HEK293 (cell line): ENCODE measurements at regions of chr12 and their contacts with region 1.

Region 1: GRCh38 chr12:56117778-56118687 is at the start of gene ZC3H10:
- H3K4me3 ChIP-seq: peak within 1 kb of the TSS; percentile 78
- H3K27ac ChIP-seq: peak within 1 kb of the TSS; percentile 99
- H3K4me1 ChIP-seq: peaks cover 5% of the 10 kb centered on the region
- CTCF ChIP-seq: peak; percentile 99

Region 2: DNA sequence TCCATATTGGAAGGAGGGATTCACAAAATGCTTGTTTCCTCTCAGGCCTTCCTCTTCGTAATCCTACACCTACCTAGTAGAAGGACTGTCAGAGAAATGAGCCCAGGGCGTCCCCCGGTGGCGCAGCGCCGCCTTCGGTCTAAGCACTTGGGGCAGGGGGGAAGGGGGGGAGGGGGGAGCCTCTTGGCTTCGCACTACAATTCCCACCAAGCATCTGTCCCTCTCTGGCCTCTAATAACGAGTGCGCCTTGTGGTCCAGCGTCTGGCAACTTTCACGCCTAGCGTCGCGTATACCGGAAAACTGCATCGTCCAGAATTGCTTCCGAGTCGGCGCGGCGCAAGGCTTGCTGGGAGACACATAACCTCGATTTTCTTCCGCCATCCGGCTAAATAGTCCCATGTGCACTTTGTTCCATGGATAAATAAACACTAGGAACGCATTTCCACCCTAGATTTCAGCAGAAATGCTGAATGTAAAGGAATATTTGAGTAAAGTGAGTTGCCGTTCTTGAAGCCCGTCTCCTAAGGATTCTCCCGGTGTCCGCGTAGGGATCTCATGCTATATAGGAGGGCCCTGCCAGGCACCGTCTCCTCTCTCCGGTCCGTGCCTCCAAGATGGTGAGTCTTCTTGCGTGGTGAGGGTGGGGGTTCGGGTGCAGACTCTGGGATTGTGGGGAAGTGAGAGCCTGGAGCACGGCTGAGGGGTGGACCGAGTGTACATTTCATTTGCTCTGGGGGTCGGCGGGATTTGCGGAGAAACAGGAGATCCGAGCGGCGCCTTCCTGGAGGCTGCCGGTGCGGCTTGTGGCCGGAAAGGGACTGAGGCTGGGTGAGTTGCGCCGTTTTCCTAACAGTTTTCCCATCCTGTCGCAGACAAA is 76.2 kb before region 1 on chr12 and contains the start of gene RPS26:
- CTCF ChIA-PET with region 1: interaction called, 10 read pairs
- POLR2A ChIA-PET with region 1: interaction called, 34 read pairs
- H3K4me3 ChIP-seq: peak within 1 kb of the TSS; percentile 75
- H3K27ac ChIP-seq: peak within 1 kb of the TSS; percentile 93
- H3K4me1 ChIP-seq: peaks cover 19% of the 10 kb centered on the region
- CTCF ChIP-seq: peak; percentile 57

Region 3: GRCh38 chr12:56078990-56079664 is 38.9 kb before region 1 on chr12:
- CTCF ChIA-PET with region 1: interaction called, 5 read pairs
- POLR2A ChIA-PET with region 1: interaction called, 23 read pairs
- H3K4me3 ChIP-seq: peak overlapping the region; percentile 40
- H3K27ac ChIP-seq: peak overlapping the region; percentile 64; the same call in 1 of the 2 replicates
- H3K4me1 ChIP-seq: no peaks in the 10 kb centered on the region; the same call in 1 of the 2 replicates
- CTCF ChIP-seq: peak; percentile 92

Region 4: DNA sequence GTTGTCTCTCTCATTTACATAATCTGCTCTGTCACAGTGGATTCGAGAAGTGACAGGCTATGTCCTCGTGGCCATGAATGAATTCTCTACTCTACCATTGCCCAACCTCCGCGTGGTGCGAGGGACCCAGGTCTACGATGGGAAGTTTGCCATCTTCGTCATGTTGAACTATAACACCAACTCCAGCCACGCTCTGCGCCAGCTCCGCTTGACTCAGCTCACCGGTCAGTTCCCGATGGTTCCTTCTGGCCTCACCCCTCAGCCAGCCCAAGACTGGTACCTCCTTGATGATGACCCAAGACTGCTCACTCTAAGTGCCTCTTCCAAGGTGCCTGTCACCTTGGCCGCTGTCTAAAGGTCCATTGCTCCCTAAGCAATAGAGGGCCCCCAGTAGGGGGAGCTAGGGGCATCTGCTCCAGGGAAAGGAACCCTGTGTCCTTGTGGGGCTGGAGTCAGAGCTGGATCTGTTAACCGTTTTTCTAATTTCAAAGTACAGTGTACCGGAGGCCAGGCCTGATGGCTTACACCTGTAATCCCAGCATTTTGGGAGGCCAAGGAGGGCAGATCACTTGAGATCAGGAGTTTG is 33.0 kb before region 1 on chr12:
- CTCF ChIA-PET with region 1: interaction called, 5 read pairs
- POLR2A ChIA-PET with region 1: interaction called, 10 read pairs
- H3K4me3 ChIP-seq: no peak overlapping the region
- H3K27ac ChIP-seq: no peak overlapping the region
- H3K4me1 ChIP-seq: no peaks in the 10 kb centered on the region; the same call in 1 of the 2 replicates
- CTCF ChIP-seq: 0 out of 2 replicates have a peak, but pooled peaks have one; percentile 10

Region 5: GRCh38 chr12:56104109-56104814 is 13.8 kb before region 1 on chr12 and contains the start of gene PA2G4:
- CTCF ChIA-PET with region 1: interaction called, 27 read pairs
- POLR2A ChIA-PET with region 1: interaction called, 165 read pairs
- H3K4me3 ChIP-seq: peak within 1 kb of the TSS; percentile 82
- H3K27ac ChIP-seq: peak within 1 kb of the TSS; percentile 90
- H3K4me1 ChIP-seq: 0 out of 2 replicates have a peak, but pooled peaks cover 2% of the 10 kb centered on the region
- CTCF ChIP-seq: no peak; the same call in 1 of the 2 replicates

Region 6: GRCh38 chr12:56127888-56128669 is 10.0 kb after region 1 on chr12 and contains the start of gene ESYT1:
- CTCF ChIA-PET with region 1: interaction called, 26 read pairs
- POLR2A ChIA-PET with region 1: interaction called, 99 read pairs
- H3K4me3 ChIP-seq: peak within 1 kb of the TSS; percentile 80
- H3K27ac ChIP-seq: peak within 1 kb of the TSS; percentile 57
- H3K4me1 ChIP-seq: peaks cover 9% of the 10 kb centered on the region
- CTCF ChIP-seq: peak; percentile 67; the same call in 1 of the 2 replicates

Region 7: DNA sequence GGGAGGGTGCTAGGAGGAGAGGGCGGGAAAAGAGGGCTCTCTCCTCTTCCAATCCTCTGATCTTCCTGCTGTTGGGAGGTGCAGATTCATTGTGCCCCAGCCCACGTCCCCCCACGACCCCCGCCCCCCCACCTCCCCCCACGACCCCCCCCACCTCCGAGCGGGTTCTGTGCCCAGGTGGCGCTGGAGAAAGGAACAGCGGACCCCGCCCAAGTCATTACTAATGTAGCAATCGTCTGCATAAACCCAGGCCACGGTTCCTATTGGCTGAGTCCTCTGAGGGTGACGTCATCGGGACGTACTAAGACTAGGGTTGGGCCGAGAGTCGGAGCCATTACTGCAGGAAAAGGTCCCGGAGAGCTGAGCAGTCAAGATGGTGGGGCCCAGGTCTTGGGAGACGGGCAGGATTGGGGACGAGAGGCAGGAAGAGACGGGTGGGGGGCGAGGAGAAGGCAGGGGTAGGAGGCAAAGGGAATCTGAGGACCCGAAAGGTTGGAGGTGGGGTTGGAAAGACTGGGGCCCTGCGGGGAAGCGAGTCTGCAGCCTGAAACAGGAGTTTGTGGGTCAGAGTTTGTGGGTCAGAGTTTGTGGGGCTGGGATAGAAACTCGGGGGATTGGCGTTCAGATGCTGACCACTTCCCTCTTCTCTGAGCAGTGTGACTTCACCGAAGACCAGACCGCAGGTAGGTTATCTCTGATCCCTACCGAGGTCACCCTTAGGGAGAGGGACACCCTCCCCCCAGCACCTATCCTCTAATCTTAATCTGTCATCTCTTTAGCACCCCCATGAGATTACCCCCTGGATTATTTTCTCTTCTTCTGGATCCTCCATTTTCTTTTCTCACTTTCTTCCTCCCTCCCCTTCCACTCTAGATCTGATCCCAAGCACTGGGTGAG is 40.2 kb after region 1 on chr12 and contains the start of gene MYL6:
- CTCF ChIA-PET with region 1: interaction called, 14 read pairs
- POLR2A ChIA-PET with region 1: interaction called, 24 read pairs
- H3K4me3 ChIP-seq: peak within 1 kb of the TSS; percentile 90
- H3K27ac ChIP-seq: peak within 1 kb of the TSS; percentile 92
- H3K4me1 ChIP-seq: peaks cover 3% of the 10 kb centered on the region; the same call in 1 of the 2 replicates
- CTCF ChIP-seq: peak; percentile 30

Region 8: GRCh38 chr12:56645717-56646446 is 527.8 kb after region 1 on chr12 and contains the start of gene ATP5F1B:
- CTCF ChIA-PET with region 1: no interaction called
- POLR2A ChIA-PET with region 1: no interaction called
- H3K4me3 ChIP-seq: peak within 1 kb of the TSS; percentile 64
- H3K27ac ChIP-seq: peak within 1 kb of the TSS; percentile 82
- H3K4me1 ChIP-seq: 0 out of 2 replicates have a peak, but pooled peaks cover 2% of the 10 kb centered on the region
- CTCF ChIP-seq: no peak